Caco-2 (cell line): ENCODE measurements at regions of chr1 and their contacts with region 1.

Region 1: DNA sequence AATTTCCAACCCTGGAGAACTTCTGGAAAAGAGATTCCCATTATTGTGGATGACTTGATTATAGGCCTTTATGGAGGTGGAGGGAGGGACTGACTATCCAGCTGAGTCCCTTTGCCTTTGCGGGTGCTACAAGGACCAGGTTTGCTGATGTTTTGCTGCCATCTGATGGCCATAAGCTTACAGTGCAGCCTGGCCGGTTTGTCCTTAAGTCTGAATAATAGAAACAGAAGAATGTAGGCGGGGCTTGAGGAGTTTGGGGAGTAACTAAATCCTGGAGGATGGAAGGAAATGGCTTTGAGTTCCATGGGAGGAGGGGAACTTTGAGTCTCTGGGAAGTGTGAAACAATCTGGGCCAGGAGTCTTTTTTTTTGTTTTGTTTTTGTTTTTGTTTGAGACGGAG is 55.7 kb upstream of the CD1D start:
- DNase-seq: peak; percentile 85 to 87
- H3K4me3 ChIP-seq: no peak overlapping the region
- H3K4me3 Mint-ChIP-seq: no peak overlapping the region
- H3K27ac Mint-ChIP-seq: no peak overlapping the region
- H3K4me1 ChIP-seq: no peaks in the 10 kb centered on the region
- H3K4me1 Mint-ChIP-seq: no peaks in the 10 kb centered on the region
- H3K27me3 ChIP-seq: no peaks in the 10 kb centered on the region; the same call in 1 of the 2 replicates
- H3K27me3 Mint-ChIP-seq: peaks cover 3% of the 10 kb centered on the region
- CTCF ChIP-seq: peak; percentile 82 to 88

Region 2: DNA sequence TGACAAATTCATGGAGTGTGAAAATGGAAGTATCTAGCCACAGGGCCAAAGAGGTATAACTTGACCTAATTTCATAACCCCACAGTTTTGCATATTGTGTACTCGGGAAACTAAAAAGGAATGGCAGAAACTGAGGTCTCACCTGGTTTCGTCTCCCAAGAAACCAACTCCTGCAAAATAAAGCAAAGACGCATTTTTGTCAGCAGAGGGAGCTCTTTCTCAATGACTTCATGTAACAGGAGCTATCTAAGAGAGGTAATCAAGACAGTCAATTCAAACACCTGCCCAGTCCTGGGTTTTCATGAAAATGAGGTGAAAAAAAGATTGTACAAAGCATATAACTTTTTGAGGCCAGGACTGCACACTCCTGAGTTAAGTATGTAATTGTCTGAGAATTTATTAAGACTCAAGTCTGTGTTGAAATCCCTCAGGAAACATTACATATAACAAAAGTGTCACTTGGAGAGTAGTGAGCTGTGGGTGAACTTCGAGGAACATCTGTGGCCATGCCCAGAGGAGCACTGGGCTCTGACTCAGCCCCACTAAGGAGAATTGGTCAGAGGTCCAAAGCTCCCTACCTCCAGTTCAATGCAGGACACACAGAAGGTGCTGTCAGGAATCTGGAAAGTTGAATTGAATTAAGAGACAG is 544.7 kb before region 1 on chr1:
- CTCF ChIA-PET with region 1: no interaction called
- POLR2A ChIA-PET with region 1: interaction called, 3 read pairs
- intact Hi-C with region 1: loop called (anchors 10 kb)
- DNase-seq: peak; percentile 49 to 66
- H3K4me3 ChIP-seq: no peak overlapping the region
- H3K4me3 Mint-ChIP-seq: no peak overlapping the region
- H3K27ac Mint-ChIP-seq: no peak overlapping the region
- H3K4me1 ChIP-seq: no peaks in the 10 kb centered on the region
- H3K4me1 Mint-ChIP-seq: no peaks in the 10 kb centered on the region
- H3K27me3 ChIP-seq: no peaks in the 10 kb centered on the region
- H3K27me3 Mint-ChIP-seq: peaks cover 15% of the 10 kb centered on the region
- CTCF ChIP-seq: peak; percentile 70 to 74

Region 3: GRCh38 chr1:157963713-157964112 is 161.3 kb before region 1 on chr1:
- CTCF ChIA-PET with region 1: interaction called, 106 read pairs
- POLR2A ChIA-PET with region 1: no interaction called
- intact Hi-C with region 1: loop called (anchors 1 kb)
- DNase-seq: peak; percentile 79 to 82
- H3K4me3 ChIP-seq: no peak overlapping the region
- H3K4me3 Mint-ChIP-seq: no peak overlapping the region
- H3K27ac Mint-ChIP-seq: no peak overlapping the region
- H3K4me1 ChIP-seq: peaks cover 32% of the 10 kb centered on the region
- H3K4me1 Mint-ChIP-seq: peaks cover 38% of the 10 kb centered on the region
- H3K27me3 ChIP-seq: no peaks in the 10 kb centered on the region
- H3K27me3 Mint-ChIP-seq: peaks cover 3% of the 10 kb centered on the region
- CTCF ChIP-seq: peak; percentile 86 to 94

Region 4: GRCh38 chr1:157992031-157992832 is 132.8 kb before region 1 on chr1:
- CTCF ChIA-PET with region 1: interaction called, 63 read pairs
- POLR2A ChIA-PET with region 1: no interaction called
- intact Hi-C with region 1: loop called (anchors 1 kb)
- DNase-seq: peak; percentile 68 to 75
- H3K4me3 ChIP-seq: no peak overlapping the region
- H3K4me3 Mint-ChIP-seq: peak overlapping the region; percentile 99
- H3K27ac Mint-ChIP-seq: peak overlapping the region; percentile 96
- H3K4me1 ChIP-seq: peaks cover 24% of the 10 kb centered on the region
- H3K4me1 Mint-ChIP-seq: peaks cover 28% of the 10 kb centered on the region
- H3K27me3 ChIP-seq: no peaks in the 10 kb centered on the region
- H3K27me3 Mint-ChIP-seq: no peaks in the 10 kb centered on the region
- CTCF ChIP-seq: peak; percentile 92 to 96

Region 5: GRCh38 chr1:158055854-158056253 is 69.1 kb before region 1 on chr1:
- CTCF ChIA-PET with region 1: no interaction called
- POLR2A ChIA-PET with region 1: no interaction called
- intact Hi-C with region 1: no loop called
- DNase-seq: no peak
- H3K4me3 ChIP-seq: no peak overlapping the region
- H3K4me3 Mint-ChIP-seq: no peak overlapping the region
- H3K27ac Mint-ChIP-seq: no peak overlapping the region
- H3K4me1 ChIP-seq: peaks cover 14% of the 10 kb centered on the region
- H3K4me1 Mint-ChIP-seq: peaks cover 17% of the 10 kb centered on the region
- H3K27me3 ChIP-seq: no peaks in the 10 kb centered on the region
- H3K27me3 Mint-ChIP-seq: no peaks in the 10 kb centered on the region
- CTCF ChIP-seq: no peak

Region 6: DNA sequence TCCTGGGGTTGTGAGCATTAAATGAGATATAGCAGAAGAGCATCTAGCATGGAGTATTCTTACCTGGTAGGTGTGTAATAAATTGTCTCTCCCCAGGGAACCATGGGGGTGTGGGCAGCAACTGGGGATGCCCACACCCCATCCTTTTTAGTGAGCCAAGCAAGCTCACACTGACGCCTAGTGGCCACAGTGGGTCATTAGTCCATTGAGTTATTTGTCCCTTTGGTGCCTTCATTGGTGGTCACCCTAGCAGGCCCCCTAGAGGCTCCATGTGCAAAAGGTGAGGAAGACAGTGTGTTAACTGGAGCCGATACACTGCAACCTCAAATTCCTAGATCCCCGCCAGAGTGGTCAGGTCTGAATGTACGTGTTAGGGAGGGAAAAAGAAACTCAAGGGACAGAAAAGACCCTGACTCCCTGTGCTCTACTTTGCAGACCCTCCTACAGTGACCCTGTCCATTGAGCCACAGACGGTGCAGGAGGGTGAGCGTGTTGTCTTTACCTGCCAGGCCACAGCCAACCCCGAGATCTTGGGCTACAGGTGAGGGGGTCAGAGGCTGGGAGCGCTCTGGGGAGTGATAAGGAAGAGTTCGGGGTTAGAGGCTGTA is 37.6 kb before region 1 on chr1:
- CTCF ChIA-PET with region 1: interaction called, 10 read pairs
- POLR2A ChIA-PET with region 1: no interaction called
- intact Hi-C with region 1: loop called (anchors 2 kb)
- DNase-seq: peak; percentile 73 to 80
- H3K4me3 ChIP-seq: no peak overlapping the region
- H3K4me3 Mint-ChIP-seq: no peak overlapping the region
- H3K27ac Mint-ChIP-seq: no peak overlapping the region
- H3K4me1 ChIP-seq: no peaks in the 10 kb centered on the region
- H3K4me1 Mint-ChIP-seq: no peaks in the 10 kb centered on the region
- H3K27me3 ChIP-seq: no peaks in the 10 kb centered on the region
- H3K27me3 Mint-ChIP-seq: no peaks in the 10 kb centered on the region
- CTCF ChIP-seq: peak; percentile 90 to 98